ENCODE measurements at regions of chr5 and their contacts with region 1.

Region 1: GRCh38 chr5:126587551-126588390 is 7.2 kb downstream of the ALDH7A1 start:
- DNase-seq: no peak
- H3K4me3 ChIP-seq: no peak overlapping the region
- H3K27ac ChIP-seq: no peak overlapping the region
- H3K27me3 ChIP-seq: no peaks in the 10 kb centered on the region
- CTCF ChIP-seq: no peak

Region 2: GRCh38 chr5:126490167-126490940 is 97.4 kb before region 1 on chr5:
- CTCF ChIA-PET with region 1: no interaction called
- POLR2A ChIA-PET with region 1: no interaction called
- DNase-seq: no peak
- H3K4me3 ChIP-seq: no peak overlapping the region
- H3K27ac ChIP-seq: no peak overlapping the region
- H3K27me3 ChIP-seq: no peaks in the 10 kb centered on the region
- CTCF ChIP-seq: no peak

Region 3: DNA sequence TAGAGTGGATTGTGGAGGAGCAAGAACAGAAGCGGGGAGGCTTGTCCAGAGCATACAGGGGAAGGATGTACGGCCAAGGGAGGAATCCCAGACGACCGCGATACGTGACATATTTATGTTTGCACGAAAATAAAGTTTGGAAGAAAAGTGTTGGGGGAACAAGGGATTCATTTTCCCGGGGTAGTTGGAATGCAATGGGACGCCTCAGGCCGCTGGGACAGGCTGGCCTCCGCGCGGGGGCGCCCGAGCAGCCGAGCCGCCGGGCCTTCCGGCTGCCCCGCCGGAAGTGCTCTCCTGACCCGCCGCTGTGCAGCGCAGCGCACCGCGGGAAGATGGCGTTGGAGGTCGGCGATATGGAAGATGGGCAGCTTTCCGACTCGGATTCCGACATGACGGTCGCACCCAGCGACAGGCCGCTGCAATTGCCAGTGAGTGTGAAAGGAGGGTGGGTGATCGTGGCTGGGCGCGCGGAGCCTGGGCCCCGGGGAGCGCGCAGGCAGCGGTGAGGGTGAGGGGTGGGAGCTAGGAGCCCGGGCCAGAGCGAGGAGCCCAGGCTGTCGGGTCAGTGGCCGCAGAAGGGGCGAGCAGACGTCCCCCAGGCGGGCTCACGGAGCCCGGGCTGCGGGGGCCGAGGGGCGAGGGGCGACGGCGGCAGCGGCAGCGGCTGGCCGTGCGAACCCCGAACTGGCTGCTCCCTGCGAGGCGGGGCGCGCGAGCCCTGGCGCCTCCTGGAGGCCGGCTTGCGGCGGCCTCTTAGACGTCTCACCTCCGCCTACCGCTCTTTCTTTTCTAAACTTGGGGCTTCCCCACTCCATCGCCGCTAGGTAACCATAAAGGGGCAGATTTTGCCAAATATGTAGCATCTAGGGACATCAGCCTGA is 13.1 kb after region 1 on chr5 and contains the start of gene PHAX:
- CTCF ChIA-PET with region 1: interaction called, 11 read pairs
- POLR2A ChIA-PET with region 1: no interaction called
- DNase-seq: peak; percentile 37
- H3K4me3 ChIP-seq: peak within 1 kb of the TSS; percentile 95
- H3K27ac ChIP-seq: peak within 1 kb of the TSS; percentile 57
- H3K27me3 ChIP-seq: no peaks in the 10 kb centered on the region
- CTCF ChIP-seq: peak; percentile 80
- polyA plus RNA-seq, gene PHAX: 38.9 and 61.0 TPM in 2 replicates

Region 4: DNA sequence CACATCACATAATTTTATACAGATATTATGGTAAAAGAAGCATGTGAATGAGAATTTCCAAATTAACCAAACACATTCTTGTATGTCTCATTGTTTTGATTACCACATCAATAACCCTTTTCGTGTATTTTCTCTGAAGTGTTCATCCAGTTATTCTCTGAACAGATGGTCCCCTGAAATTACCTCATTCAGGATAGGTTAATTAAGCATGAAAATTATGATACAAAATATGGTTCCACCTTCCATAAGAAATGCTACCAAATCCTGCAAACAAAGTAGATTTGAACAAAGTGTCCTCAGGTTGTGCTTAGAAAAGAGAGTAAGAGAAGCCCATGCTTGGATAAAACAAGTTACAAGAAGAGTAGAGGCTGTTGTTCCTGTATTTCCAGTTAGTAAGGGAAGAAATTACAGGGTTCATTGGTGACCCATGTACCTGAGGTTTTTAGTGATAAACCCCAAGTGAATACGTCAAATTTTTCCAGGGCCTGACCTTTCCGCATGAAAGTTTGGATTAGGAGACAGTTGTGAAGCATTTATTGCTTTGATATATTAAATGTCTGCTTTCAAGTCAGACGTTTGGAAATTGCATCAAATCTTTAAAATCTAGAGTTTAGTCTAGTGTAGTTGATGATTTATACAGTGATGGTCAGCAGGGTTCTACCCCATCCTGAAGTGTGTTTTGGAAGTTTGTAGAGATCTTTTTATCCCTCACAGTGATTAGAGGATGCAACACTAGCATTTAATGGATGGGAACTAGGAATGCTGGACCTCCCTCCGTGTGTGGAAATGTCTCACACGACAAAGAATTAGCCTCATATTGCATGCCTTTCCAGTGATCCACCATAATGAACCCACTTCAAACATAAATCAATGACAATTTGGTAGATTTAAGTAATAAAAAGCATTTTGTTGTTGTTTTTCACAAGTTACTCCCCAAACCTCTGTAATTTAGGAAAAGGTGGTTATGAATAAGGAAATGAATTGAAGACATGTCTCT is 106.3 kb after region 1 on chr5:
- CTCF ChIA-PET with region 1: no interaction called
- POLR2A ChIA-PET with region 1: no interaction called
- DNase-seq: no peak
- H3K4me3 ChIP-seq: no peak overlapping the region
- H3K27ac ChIP-seq: no peak overlapping the region
- H3K27me3 ChIP-seq: no peaks in the 10 kb centered on the region
- CTCF ChIP-seq: no peak

Region 5: GRCh38 chr5:126707080-126707479 is 119.3 kb after region 1 on chr5:
- CTCF ChIA-PET with region 1: no interaction called
- POLR2A ChIA-PET with region 1: no interaction called
- DNase-seq: no peak
- H3K4me3 ChIP-seq: no peak overlapping the region
- H3K27ac ChIP-seq: no peak overlapping the region
- H3K27me3 ChIP-seq: no peaks in the 10 kb centered on the region
- CTCF ChIP-seq: no peak